GM12878 (cell line): ENCODE measurements at regions of chr7 and their contacts with region 1.

Region 1: DNA sequence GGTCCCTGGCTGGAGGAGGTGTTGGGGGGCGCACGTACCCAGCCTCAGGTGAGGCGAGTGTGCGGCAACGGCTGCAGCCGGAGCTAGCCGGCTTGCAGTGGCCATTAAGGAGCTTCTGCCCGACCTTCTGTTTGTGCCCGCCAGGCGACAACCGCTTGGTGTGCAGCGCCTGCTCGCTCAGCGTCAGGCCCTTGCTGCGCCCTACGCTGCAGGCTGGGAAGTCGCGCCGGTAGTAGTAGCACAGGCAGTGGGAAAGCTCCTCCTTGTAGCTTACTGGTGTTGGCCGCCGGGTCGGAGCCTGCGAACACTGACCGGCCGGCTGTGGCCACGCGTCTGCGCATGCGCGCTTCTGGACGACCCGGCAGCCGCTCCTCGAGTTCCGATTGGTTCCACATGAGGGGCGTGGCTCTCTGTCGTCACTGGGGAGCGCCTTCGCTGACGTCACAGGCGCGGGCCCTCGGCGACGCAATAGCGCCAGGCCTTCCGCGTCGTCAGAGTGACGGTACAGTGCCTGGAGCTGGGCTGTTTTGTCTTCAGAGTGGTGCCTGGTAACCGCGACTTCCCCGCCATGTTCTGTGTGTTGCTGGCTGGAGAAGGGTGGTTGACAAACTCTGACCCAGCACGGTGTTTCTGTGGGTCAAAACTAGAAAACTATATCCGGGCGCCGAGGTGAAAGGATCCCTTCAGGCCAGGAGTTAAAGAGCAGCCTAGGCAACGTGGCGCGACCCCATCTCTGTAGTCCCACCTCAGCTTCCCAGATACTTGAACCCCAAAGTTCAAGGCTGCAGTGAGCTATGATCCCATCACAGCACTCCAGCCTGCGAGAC is 76.3 kb upstream of the TMEM248 start:
- DNase-seq: peak; percentile 92
- ATAC-seq: peak; percentile 93
- H3K4me3 ChIP-seq: peak overlapping the region; percentile 93
- H3K27ac ChIP-seq: peak overlapping the region; percentile 61
- H3K4me1 ChIP-seq: no peaks in the 10 kb centered on the region; the same call in 1 of the 2 replicates
- H3K27me3 ChIP-seq: no peaks in the 10 kb centered on the region
- CTCF ChIP-seq: peak in 1 of 3 experiments; percentile 36; a peak in 1 of 6 replicates
- EP300 ChIP-seq: no peak
- POLR2A ChIP-seq: peak; percentile 94
- RAD21 ChIP-seq: no peak

Region 2: GRCh38 chr7:66575398-66575797 is 269.4 kb before region 1 on chr7:
- CTCF ChIA-PET with region 1: no interaction called
- POLR2A ChIA-PET with region 1: no interaction called
- RAD21 ChIA-PET with region 1: no interaction called
- SMC1A ChIA-PET with region 1: no interaction called
- in situ Hi-C with region 1: no loop called
- intact Hi-C with region 1: no loop called
- DNase-seq: no peak
- ATAC-seq: peak; percentile 27; the same call in 2 of the 3 replicates
- H3K4me3 ChIP-seq: no peak overlapping the region
- H3K27ac ChIP-seq: no peak overlapping the region
- H3K4me1 ChIP-seq: peaks cover 5% of the 10 kb centered on the region; the same call in 1 of the 2 replicates
- H3K27me3 ChIP-seq: no peaks in the 10 kb centered on the region
- CTCF ChIP-seq: no peak
- EP300 ChIP-seq: no peak
- POLR2A ChIP-seq: no peak
- RAD21 ChIP-seq: no peak

Region 3: DNA sequence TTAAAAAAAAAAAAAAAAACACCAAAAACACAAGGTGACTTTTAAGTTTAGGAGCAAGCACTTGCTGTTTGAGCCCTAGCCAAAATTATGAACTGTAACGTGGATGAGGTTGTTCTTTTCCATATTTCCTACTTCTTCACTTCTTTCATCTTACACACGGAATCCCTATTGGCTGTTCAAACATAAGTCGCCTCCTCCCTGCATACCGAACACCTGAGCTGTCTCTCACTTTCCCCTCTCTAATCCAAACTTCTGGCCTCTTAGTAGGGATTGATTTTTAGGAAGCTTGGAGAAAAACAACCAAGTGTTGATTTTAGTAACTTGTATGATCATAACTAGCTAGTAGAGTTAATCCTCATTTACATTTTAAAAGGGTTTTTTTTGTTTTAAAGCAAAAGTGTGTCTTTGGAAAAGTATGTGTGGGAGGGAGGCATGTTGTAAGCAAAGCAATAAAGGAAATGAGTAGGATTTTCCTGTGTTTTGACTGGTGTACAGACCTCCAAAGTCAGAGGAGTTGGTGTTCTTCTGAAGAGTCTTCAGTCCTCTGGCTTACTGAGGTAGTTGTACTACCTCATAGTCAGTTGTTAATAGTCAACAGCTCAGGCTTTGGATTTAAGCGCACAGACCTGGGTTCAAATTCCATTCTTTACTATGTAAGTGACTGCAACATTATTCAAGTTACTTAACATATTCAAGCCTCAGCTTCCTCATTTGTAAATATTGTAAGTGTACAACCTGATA is 64.9 kb before region 1 on chr7:
- CTCF ChIA-PET with region 1: no interaction called
- POLR2A ChIA-PET with region 1: no interaction called
- RAD21 ChIA-PET with region 1: no interaction called
- SMC1A ChIA-PET with region 1: no interaction called
- in situ Hi-C with region 1: no loop called
- intact Hi-C with region 1: no loop called
- DNase-seq: no peak
- ATAC-seq: no peak
- H3K4me3 ChIP-seq: no peak overlapping the region
- H3K27ac ChIP-seq: no peak overlapping the region
- H3K4me1 ChIP-seq: no peaks in the 10 kb centered on the region
- H3K27me3 ChIP-seq: no peaks in the 10 kb centered on the region
- CTCF ChIP-seq: no peak
- EP300 ChIP-seq: no peak
- POLR2A ChIP-seq: no peak
- RAD21 ChIP-seq: no peak

Region 4: GRCh38 chr7:66886152-66886551 is 41.4 kb after region 1 on chr7:
- CTCF ChIA-PET with region 1: interaction called, 3 read pairs
- POLR2A ChIA-PET with region 1: no interaction called
- RAD21 ChIA-PET with region 1: interaction called, 9 read pairs
- SMC1A ChIA-PET with region 1: interaction called, 5 read pairs
- in situ Hi-C with region 1: no loop called
- intact Hi-C with region 1: loop called (anchors 2 kb)
- DNase-seq: peak; percentile 45
- ATAC-seq: peak; percentile 88
- H3K4me3 ChIP-seq: no peak overlapping the region
- H3K27ac ChIP-seq: no peak overlapping the region
- H3K4me1 ChIP-seq: peaks cover 16% of the 10 kb centered on the region
- H3K27me3 ChIP-seq: no peaks in the 10 kb centered on the region
- CTCF ChIP-seq: no peak
- EP300 ChIP-seq: peak in 1 of 2 experiments; percentile 67; a peak in 3 of 4 replicates
- POLR2A ChIP-seq: no peak
- RAD21 ChIP-seq: no peak